Activated CD4-positive, alpha-beta memory T cell treated with anti-CD3 and anti-CD28 coated beads, Interleukin-2, amount 10 ng/mL, durations not matched to agents 7 days and 5 days (primary cell): ENCODE measurements at regions of chr5 and their contacts with region 1.

Region 1: DNA sequence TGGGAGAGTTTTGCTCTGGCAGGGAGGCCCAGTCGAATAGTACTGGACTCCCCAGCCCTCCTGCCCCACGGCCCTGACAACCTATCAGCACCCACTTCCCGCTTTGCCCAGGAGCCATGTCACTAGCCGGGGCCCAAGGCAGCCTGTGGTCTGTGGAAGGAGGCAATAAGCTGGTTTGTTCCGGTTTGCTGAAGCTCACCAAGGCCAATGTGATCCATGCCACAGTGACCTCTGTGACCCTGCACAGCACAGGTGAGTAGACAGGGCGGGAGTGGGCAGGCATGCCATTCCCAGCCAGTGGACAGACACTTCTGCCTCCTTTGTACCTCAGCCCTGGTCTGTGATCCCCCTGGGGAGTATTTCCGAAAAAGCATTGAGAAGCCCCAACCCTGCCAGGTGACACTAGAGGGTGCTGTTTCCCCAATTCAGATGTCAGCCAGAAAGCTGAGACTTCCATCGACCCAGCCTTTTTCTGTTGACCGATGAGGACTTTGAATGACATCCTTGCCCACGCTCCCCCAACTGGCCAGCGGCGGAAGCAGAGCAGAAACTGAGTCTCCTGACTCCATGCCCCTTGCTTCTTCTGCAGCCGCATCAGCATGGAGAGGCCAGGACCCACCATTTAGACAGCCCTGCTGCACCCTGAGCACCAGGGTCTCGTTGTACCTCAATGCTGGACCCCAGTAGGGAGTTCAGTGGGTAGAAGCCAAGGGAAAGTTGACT is 9.6 kb downstream of the PCYOX1L start:
- DNase-seq: peak; percentile 63
- H3K4me3 Mint-ChIP-seq: no peak overlapping the region
- H3K27ac Mint-ChIP-seq: no peak overlapping the region
- H3K4me1 Mint-ChIP-seq: peaks cover 6% of the 10 kb centered on the region
- H3K27me3 Mint-ChIP-seq: no peaks in the 10 kb centered on the region

Region 2: DNA sequence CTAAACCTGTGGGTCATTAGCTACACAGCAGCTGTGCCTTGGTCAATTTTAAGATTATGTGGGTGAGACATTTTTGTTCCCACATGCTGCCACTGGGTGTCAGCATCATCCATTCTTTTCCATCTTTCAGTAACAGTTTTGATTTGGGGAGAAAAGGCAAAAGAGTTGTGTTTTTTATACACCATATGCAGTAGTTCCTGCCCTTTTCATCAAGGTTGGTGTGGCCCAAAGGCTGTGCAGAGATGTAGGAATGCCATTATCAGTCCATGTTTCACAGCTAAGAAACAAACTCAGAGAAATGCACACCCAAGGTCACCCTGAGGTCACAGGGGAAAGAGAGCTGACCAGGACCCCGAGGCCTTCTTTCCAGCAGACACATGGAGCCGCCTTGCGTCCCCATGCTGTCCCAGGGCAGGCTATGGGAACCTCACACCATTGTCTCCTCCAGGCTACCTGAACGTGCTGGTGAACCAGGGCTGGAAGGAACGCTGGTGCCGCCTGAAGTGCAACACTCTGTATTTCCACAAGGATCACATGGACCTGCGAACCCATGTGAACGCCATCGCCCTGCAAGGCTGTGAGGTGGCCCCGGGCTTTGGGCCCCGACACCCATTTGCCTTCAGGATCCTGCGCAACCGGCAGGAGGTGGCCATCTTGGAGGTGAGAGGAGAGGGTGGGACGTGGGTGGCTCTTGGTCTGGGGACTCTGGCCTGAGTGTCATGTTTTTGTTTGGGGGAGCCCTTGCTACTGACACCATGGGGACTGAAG is 49.9 kb before region 1 on chr5:
- CTCF ChIA-PET with region 1: interaction called, 278 read pairs
- POLR2A ChIA-PET with region 1: interaction called, 6 read pairs
- DNase-seq: peak; percentile 45
- H3K4me3 Mint-ChIP-seq: no peak overlapping the region
- H3K27ac Mint-ChIP-seq: no peak overlapping the region
- H3K4me1 Mint-ChIP-seq: peaks cover 2% of the 10 kb centered on the region
- H3K27me3 Mint-ChIP-seq: no peaks in the 10 kb centered on the region

Region 3: DNA sequence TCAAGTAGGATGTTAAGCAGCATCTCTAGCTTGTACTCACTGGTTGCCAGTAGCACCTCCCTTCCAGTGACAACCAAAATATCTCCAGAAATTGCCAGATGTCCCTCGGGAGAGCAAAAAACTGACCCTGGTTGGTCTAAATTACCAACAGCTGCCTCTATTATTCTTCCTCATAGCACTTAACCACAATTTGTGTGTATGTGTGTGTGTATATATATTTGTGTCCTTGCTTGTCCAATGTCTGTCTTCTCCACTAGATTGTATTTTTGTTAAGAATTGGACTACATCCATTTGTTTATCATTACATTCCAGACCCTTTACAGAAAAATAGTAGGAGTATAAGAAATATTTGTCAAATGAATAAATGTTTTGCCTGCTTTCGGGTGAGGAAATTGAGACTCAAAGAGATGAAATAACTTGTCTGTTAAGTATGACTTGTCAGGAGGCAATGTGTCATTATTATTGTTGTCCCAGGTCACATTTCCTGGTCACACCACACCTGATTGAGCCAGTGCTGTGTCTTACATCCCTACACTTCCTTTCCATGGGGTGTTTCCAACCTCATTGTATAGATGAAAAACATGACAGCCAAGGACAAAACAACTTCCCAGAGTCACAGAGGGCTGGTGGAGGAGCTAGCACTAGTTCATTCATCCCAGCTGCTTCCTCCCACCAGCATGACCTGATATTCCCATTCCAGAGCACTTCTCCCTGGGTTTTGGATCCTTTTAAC is 33.5 kb before region 1 on chr5:
- CTCF ChIA-PET with region 1: interaction called, 11 read pairs
- POLR2A ChIA-PET with region 1: no interaction called
- DNase-seq: no peak
- H3K4me3 Mint-ChIP-seq: no peak overlapping the region
- H3K27ac Mint-ChIP-seq: no peak overlapping the region
- H3K4me1 Mint-ChIP-seq: no peaks in the 10 kb centered on the region
- H3K27me3 Mint-ChIP-seq: peaks cover 8% of the 10 kb centered on the region

Region 4: DNA sequence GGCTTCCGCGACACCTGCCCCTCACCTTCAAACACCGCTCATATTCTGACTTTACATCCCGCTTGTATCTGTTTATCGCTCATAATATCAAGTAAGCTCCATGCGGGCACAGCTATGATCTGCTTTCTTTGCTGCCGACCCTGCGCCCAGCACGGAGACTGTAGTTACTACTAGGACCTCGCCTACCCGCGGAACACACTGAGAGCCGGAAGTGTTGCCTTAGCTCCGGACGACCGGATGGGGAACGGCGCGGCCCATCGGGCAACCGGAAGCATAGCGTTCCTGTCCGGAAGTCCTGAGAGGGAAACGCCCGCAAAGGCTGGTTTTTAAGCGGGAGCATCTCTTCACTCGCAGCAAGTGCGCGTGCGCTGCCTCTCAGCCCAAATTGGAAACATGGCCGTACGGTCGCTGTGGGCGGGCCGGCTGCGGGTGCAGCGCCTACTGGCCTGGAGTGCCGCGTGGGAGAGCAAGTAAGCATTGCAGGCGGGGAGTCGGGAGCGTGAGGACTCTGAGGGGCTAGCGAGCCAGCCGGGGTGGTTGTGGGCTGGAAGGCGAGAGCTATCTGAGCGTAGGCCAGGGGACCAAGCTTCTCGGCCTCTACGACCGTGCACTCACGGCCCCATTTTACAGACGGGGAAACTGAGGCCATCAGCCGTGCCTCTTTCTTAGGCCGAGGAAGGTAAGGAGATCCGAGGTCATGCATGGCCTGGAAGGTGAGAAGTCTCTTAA is 22.1 kb before region 1 on chr5 and contains the start of gene GRPEL2:
- CTCF ChIA-PET with region 1: interaction called, 63 read pairs
- POLR2A ChIA-PET with region 1: interaction called, 26 read pairs
- DNase-seq: peak; percentile 94
- H3K4me3 Mint-ChIP-seq: peak within 1 kb of the TSS; percentile 81
- H3K27ac Mint-ChIP-seq: peak within 1 kb of the TSS; percentile 87
- H3K4me1 Mint-ChIP-seq: peaks cover 47% of the 10 kb centered on the region
- H3K27me3 Mint-ChIP-seq: no peaks in the 10 kb centered on the region
- total RNA-seq, gene GRPEL2: 43.8 to 49.4 TPM

Region 5: DNA sequence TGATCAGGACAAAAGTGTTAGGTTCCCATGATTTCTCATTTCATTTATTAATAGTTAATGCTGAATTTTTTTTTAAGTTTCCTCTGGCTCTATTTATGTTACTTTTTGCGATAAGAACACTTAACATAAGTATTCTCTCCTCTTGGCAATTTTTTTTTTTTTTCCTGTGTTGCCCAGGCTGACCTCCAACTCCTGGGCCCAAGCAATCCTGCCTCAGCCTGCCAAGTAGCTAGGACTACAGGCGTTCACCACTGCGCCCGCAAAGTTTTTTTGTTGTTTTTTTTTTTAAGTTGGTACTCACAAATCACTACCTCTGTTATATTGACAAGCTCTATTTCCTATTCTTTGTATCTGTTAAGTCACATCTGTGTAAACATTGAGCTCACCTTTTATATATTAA is 15.2 kb before region 1 on chr5:
- CTCF ChIA-PET with region 1: interaction called, 63 read pairs
- POLR2A ChIA-PET with region 1: interaction called, 31 read pairs
- DNase-seq: no peak
- H3K4me3 Mint-ChIP-seq: no peak overlapping the region
- H3K27ac Mint-ChIP-seq: no peak overlapping the region
- H3K4me1 Mint-ChIP-seq: peaks cover 88% of the 10 kb centered on the region
- H3K27me3 Mint-ChIP-seq: no peaks in the 10 kb centered on the region

Region 6: GRCh38 chr5:149381987-149382340 is 14.6 kb after region 1 on chr5:
- CTCF ChIA-PET with region 1: interaction called, 16 read pairs
- POLR2A ChIA-PET with region 1: no interaction called
- DNase-seq: peak; percentile 75
- H3K4me3 Mint-ChIP-seq: no peak overlapping the region
- H3K27ac Mint-ChIP-seq: no peak overlapping the region
- H3K4me1 Mint-ChIP-seq: no peaks in the 10 kb centered on the region
- H3K27me3 Mint-ChIP-seq: peaks cover 1% of the 10 kb centered on the region